Activated B cell treated with CpG ODN at 0.5 μM for 24 hours (primary cell): ENCODE measurements at regions of chrX and their contacts with region 1.

Region 1: DNA sequence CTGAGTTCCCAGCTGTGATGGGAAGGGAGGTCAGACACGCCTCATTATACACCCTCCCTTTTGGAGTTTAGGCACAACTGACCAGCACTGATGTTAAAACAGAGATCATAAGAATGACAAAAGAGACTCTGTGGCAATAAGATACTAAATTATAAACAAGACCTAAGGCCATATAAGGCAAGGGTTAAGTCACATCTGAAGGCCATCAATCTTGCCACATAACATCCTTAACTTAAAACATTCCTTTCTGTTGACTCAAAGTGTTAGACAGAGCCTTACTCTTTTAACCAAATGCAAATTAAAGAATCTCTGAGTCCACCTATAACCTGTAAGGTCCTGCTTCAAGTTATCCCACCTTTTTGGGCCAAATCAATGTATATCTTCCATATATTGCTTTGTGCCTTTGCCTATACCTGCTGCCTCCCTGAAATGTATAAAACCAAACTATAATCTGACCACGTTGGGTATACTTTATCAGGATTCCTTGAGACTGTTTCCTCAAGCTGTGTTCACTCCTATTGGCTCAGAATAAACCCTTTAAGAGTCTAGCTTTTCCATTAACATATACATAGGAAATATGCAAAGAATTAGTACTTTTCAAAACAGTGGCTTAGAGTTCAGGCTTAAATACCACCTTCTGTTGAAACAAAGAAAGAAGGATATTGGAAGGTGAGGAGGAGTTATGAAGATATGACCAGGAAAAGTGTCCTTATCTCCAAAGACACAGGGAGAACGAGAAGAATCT is 214.4 kb upstream of the PPP1R2C start:
- DNase-seq: no peak
- ATAC-seq: no peak
- H3K4me3 Mint-ChIP-seq: no peak overlapping the region
- H3K27ac Mint-ChIP-seq: peak overlapping the region; percentile 59
- H3K4me1 Mint-ChIP-seq: peaks cover 52% of the 10 kb centered on the region
- H3K27me3 Mint-ChIP-seq: no peaks in the 10 kb centered on the region
- CTCF ChIP-seq: no peak

Region 2: GRCh38 chrX:42519666-42520231 is 472.6 kb before region 1 on chrX:
- CTCF ChIA-PET with region 1: no interaction called
- POLR2A ChIA-PET with region 1: no interaction called
- intact Hi-C with region 1: no loop called
- DNase-seq: no peak
- ATAC-seq: no peak
- H3K4me3 Mint-ChIP-seq: no peak overlapping the region
- H3K27ac Mint-ChIP-seq: no peak overlapping the region
- H3K4me1 Mint-ChIP-seq: no peaks in the 10 kb centered on the region
- H3K27me3 Mint-ChIP-seq: no peaks in the 10 kb centered on the region
- CTCF ChIP-seq: no peak

Region 3: GRCh38 chrX:42930071-42930470 is 62.3 kb before region 1 on chrX:
- CTCF ChIA-PET with region 1: no interaction called
- POLR2A ChIA-PET with region 1: no interaction called
- intact Hi-C with region 1: no loop called
- DNase-seq: no peak
- ATAC-seq: no peak
- H3K4me3 Mint-ChIP-seq: no peak overlapping the region
- H3K27ac Mint-ChIP-seq: no peak overlapping the region
- H3K4me1 Mint-ChIP-seq: peaks cover 31% of the 10 kb centered on the region
- H3K27me3 Mint-ChIP-seq: no peaks in the 10 kb centered on the region
- CTCF ChIP-seq: no peak

Region 4: DNA sequence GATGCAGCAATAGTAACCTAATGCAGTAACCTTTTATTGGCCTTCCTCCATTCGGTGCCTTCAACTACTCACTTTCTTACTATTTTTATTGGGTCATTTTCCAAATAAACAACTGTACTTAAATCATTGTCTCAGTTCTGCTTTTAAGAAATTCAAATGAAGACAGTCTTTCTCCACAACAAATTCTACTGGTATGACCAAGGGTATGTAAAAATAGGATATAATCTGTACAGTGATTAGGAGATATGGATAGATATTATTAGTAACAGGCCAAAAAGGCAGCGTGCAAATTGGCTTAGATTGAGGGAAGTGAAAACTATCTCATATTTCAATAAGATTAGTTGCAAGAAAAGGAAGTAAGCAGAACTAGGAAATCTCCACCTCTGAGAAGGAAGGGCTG is 37.0 kb before region 1 on chrX:
- CTCF ChIA-PET with region 1: no interaction called
- POLR2A ChIA-PET with region 1: no interaction called
- intact Hi-C with region 1: loop called (anchors 2 kb)
- DNase-seq: no peak
- ATAC-seq: peak; percentile 78
- H3K4me3 Mint-ChIP-seq: peak overlapping the region; percentile 29
- H3K27ac Mint-ChIP-seq: peak overlapping the region; percentile 82
- H3K4me1 Mint-ChIP-seq: peaks cover 48% of the 10 kb centered on the region
- H3K27me3 Mint-ChIP-seq: no peaks in the 10 kb centered on the region
- CTCF ChIP-seq: no peak

Region 5: GRCh38 chrX:42967681-42968300 is 24.6 kb before region 1 on chrX:
- CTCF ChIA-PET with region 1: no interaction called
- POLR2A ChIA-PET with region 1: interaction called, 10 read pairs
- intact Hi-C with region 1: no loop called
- DNase-seq: no peak
- ATAC-seq: no peak
- H3K4me3 Mint-ChIP-seq: no peak overlapping the region
- H3K27ac Mint-ChIP-seq: no peak overlapping the region
- H3K4me1 Mint-ChIP-seq: peaks cover 7% of the 10 kb centered on the region
- H3K27me3 Mint-ChIP-seq: no peaks in the 10 kb centered on the region
- CTCF ChIP-seq: no peak